ENCODE measurements at regions of chr2 and their contacts with region 1.

Region 1: GRCh38 chr2:134411828-134412638 is 158.2 kb downstream of the MGAT5 start:
- DNase-seq: peak; percentile 86
- ATAC-seq: peak; percentile 98
- H3K4me3 ChIP-seq: no peak overlapping the region
- H3K27ac ChIP-seq: peak overlapping the region; percentile 81
- H3K4me1 ChIP-seq: peaks cover 27% of the 10 kb centered on the region
- H3K27me3 ChIP-seq: no peaks in the 10 kb centered on the region
- CTCF ChIP-seq: peak; percentile 83 to 98 (median 93); a peak in 5 of 6 replicates
- EP300 ChIP-seq: peak in 1 of 2 experiments; percentile 23; a peak in 1 of 4 replicates
- POLR2A ChIP-seq: no peak
- RAD21 ChIP-seq: peak; percentile 98

Region 2: DNA sequence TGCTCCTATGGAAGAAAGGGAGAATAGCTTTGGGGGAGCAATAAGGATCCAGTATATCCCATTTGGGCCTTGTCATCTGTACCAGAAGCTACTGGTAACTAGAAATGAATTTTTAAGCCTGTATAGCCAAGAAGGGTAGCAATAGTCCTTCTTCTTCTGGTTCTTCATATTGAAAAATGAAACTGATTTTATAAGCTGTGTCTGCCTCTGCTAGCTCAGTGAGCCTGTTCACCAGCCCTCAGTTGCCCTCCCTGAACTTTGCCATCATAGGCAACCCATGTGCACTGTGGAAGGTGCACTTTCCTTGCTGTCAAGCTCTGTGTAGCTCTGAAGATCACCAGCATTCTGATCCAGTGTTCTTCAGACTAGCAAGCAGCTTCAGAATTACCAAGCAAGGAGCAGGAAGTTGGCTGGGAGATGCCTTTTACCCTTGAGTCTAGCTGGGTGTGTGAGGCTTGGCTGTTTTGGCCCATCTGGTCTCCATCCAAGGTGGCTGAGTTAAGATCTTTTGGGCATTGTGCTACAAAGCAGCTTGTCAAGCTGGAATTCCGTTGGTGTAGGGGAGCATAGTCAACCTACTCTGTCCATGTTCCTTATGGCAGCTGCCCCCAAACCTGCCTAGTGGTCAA is 213.9 kb before region 1 on chr2:
- CTCF ChIA-PET with region 1: no interaction called
- POLR2A ChIA-PET with region 1: no interaction called
- RAD21 ChIA-PET with region 1: interaction called, 3 read pairs
- SMC1A ChIA-PET with region 1: interaction called, 12 read pairs
- in situ Hi-C with region 1: no loop called
- intact Hi-C with region 1: no loop called
- DNase-seq: no peak
- ATAC-seq: peak; percentile 62
- H3K4me3 ChIP-seq: no peak overlapping the region
- H3K27ac ChIP-seq: peak overlapping the region; percentile 52
- H3K4me1 ChIP-seq: peaks cover 31% of the 10 kb centered on the region
- H3K27me3 ChIP-seq: no peaks in the 10 kb centered on the region
- CTCF ChIP-seq: no peak
- EP300 ChIP-seq: no peak
- POLR2A ChIP-seq: no peak
- RAD21 ChIP-seq: no peak

Region 3: DNA sequence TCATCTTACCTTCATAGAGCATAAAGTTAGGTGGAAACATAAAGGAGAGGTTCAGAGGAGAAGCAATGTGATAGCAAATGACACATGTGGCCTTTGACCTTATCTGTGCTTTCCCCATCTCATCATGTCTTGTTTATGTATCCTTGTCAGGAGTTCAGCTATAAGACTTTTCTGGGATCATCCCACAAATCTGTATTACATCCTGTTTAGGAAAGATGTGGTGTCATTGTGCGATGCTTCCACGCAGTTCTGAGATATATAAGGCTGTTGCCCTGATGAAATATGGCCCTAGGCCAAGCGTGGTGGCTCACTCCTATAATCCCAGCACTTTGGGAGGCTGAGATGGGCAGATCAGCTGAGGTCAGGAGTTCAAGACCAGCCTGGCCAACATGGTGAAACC is 173.7 kb before region 1 on chr2:
- CTCF ChIA-PET with region 1: interaction called, 60 read pairs
- POLR2A ChIA-PET with region 1: interaction called, 3 read pairs
- RAD21 ChIA-PET with region 1: interaction called, 55 read pairs
- SMC1A ChIA-PET with region 1: interaction called, 45 read pairs
- in situ Hi-C with region 1: no loop called
- intact Hi-C with region 1: loop called (anchors 5 kb)
- DNase-seq: no peak
- ATAC-seq: no peak
- H3K4me3 ChIP-seq: no peak overlapping the region
- H3K27ac ChIP-seq: no peak overlapping the region
- H3K4me1 ChIP-seq: peaks cover 30% of the 10 kb centered on the region
- H3K27me3 ChIP-seq: no peaks in the 10 kb centered on the region
- CTCF ChIP-seq: no peak
- EP300 ChIP-seq: no peak
- POLR2A ChIP-seq: no peak
- RAD21 ChIP-seq: no peak

Region 4: DNA sequence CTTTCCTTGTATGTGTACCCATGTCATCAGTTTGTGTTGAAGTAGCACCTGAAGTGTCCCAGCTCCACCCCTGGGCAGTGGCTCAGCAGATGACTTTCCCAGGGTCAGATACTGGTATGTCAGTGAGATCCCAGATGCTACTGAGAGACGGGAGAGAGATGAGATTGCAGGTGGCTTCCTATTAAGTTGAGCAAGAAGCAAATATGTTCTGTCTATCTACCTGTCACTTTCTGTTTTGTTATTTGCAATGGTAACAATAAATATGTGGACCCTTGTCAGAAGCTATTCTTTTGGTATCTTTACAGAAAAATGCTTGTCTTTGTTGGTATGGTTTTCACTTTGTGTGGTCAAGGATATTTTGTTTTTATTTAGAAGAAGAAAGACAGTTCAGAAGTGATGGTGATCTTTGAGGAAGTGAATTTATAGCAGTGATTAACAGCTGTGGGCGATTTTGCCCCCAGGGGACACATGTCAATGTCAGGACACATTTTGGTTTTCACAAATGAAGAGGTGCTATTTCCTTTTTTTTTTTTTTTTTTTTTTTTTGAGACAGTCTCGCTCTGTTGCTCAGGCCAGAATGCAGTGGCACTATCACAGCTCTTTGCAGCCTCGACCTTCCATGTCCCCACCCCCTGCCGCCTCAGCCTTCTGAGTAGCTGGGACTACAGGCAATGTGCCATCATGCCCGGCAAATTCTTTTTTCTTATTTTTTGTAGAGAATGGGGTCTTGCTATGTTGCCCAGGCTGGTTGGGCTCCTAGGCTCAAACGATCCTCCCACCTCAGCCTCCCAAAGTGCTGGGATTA is 136.8 kb before region 1 on chr2:
- CTCF ChIA-PET with region 1: interaction called, 13 read pairs
- POLR2A ChIA-PET with region 1: interaction called, 3 read pairs
- RAD21 ChIA-PET with region 1: interaction called, 13 read pairs
- SMC1A ChIA-PET with region 1: interaction called, 16 read pairs
- in situ Hi-C with region 1: no loop called
- intact Hi-C with region 1: no loop called
- DNase-seq: peak; percentile 95
- ATAC-seq: peak; percentile 89
- H3K4me3 ChIP-seq: peak overlapping the region; percentile 31; the same call in 1 of the 2 replicates
- H3K27ac ChIP-seq: peak overlapping the region; percentile 88
- H3K4me1 ChIP-seq: peaks cover 91% of the 10 kb centered on the region
- H3K27me3 ChIP-seq: no peaks in the 10 kb centered on the region
- CTCF ChIP-seq: no peak
- EP300 ChIP-seq: peak; percentile 94 to 97
- POLR2A ChIP-seq: no peak
- RAD21 ChIP-seq: no peak; the same call in 1 of the 2 replicates

Region 5: DNA sequence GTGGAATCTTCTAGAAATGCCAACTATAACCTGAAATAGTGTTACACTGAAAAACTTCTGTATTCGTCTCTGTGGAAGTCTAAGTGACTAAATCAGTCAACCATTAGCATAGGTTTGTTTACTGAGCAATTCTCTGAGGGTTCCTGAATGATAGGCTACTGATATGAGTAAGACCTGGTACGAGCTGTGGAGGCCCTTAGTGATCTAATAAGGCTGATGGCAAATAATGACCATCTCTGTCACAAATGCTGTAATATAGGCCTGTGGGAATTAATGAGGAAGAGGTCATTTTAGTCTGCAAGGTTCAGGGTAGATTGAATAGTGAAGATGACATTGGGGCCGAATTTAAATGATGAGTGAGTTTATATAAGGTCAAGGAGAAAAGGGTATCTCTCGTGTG is 75.7 kb before region 1 on chr2:
- CTCF ChIA-PET with region 1: interaction called, 8 read pairs
- POLR2A ChIA-PET with region 1: no interaction called
- RAD21 ChIA-PET with region 1: interaction called, 8 read pairs
- SMC1A ChIA-PET with region 1: interaction called, 16 read pairs
- in situ Hi-C with region 1: no loop called
- intact Hi-C with region 1: no loop called
- DNase-seq: peak; percentile 53
- ATAC-seq: peak; percentile 96
- H3K4me3 ChIP-seq: no peak overlapping the region
- H3K27ac ChIP-seq: peak overlapping the region; percentile 48
- H3K4me1 ChIP-seq: peaks cover 25% of the 10 kb centered on the region
- H3K27me3 ChIP-seq: no peaks in the 10 kb centered on the region
- CTCF ChIP-seq: no peak
- EP300 ChIP-seq: peak in 1 of 2 experiments; percentile 67; a peak in 1 of 4 replicates
- POLR2A ChIP-seq: no peak
- RAD21 ChIP-seq: no peak

Region 6: GRCh38 chr2:134454931-134455330 is 42.9 kb after region 1 on chr2:
- CTCF ChIA-PET with region 1: interaction called, 17 read pairs
- POLR2A ChIA-PET with region 1: no interaction called
- RAD21 ChIA-PET with region 1: interaction called, 5 read pairs
- SMC1A ChIA-PET with region 1: no interaction called
- in situ Hi-C with region 1: no loop called
- intact Hi-C with region 1: no loop called
- DNase-seq: no peak
- ATAC-seq: no peak
- H3K4me3 ChIP-seq: no peak overlapping the region
- H3K27ac ChIP-seq: no peak overlapping the region
- H3K4me1 ChIP-seq: no peaks in the 10 kb centered on the region
- H3K27me3 ChIP-seq: no peaks in the 10 kb centered on the region
- CTCF ChIP-seq: no peak
- EP300 ChIP-seq: no peak
- POLR2A ChIP-seq: 0 out of 2 replicates have a peak, but pooled peaks have one; percentile 14
- RAD21 ChIP-seq: no peak

Measured in GM12878 (cell line).